Tibial artery (tissue), 4 donors: ENCODE measurements at regions of chr20 and their contacts with region 1.

Region 1: DNA sequence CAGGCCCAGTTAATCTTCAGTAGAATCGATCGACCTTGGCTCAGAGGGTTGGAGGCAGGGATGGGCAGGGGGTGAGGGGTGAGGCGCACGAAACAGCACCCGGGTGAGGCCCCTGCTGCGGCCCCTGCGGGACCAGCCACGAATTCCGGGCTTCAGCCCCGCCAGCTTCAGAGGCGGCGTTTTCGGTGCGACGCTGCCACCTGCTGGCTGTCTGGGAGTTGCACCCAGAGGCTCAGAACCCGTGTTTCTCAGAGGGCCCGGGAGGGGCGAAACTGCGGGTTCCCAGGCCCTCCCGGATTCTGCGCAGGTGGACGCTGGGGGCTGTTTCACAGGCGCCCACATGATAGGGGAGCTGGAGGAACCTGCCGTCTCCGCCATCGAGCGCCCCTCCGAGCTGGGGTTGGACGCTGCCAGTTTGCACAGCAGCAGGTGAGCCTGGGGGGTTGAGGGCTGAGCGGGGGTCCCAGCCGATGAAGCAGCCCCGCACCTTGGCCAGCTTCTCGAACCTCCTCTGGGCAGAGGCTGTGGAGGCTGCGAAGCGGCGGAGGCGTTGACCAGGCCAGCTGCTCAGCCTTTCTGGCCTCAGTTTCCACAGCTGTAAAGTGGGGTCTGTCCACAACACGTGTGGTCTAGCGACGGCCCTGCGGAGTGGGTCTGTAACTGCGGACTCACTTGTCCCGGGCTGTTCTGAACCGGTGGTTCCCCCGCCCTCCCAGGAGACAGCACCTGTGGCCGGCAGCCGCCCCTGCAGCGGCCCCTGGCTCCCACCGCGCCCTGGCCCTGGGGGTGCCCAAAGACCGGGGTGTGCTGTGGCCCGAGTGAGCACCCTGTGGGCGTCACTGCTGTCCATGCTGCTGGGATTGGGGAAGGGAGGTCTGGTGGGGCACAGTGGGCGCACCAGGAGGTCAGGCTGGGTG is 2.5 kb upstream of the BHLHE23 start:
- DNase-seq: peak; percentile 38 to 80
- H3K4me3 ChIP-seq: no peak overlapping the region
- H3K27ac ChIP-seq: no peak overlapping the region
- H3K4me1 ChIP-seq: peaks cover 0 to 36% (median 20%) of the 10 kb centered on the region in 4 donors
- H3K27me3 ChIP-seq: peaks cover 15 to 89% of the 10 kb centered on the region in 2 donors
- CTCF ChIP-seq: peak; percentile 92 to 95

Region 2: GRCh38 chr20:62900052-62900691 is 109.1 kb before region 1 on chr20:
- intact Hi-C with region 1: loop called (anchors 5 kb)
- DNase-seq: peak; percentile 71 to 84
- H3K4me3 ChIP-seq: no peak overlapping the region
- H3K27ac ChIP-seq: no peak overlapping the region
- H3K4me1 ChIP-seq: peaks cover 0 to 37% (median 18%) of the 10 kb centered on the region in 4 donors
- H3K27me3 ChIP-seq: no peaks in the 10 kb centered on the region
- CTCF ChIP-seq: peak; percentile 88 to 93

Region 3: DNA sequence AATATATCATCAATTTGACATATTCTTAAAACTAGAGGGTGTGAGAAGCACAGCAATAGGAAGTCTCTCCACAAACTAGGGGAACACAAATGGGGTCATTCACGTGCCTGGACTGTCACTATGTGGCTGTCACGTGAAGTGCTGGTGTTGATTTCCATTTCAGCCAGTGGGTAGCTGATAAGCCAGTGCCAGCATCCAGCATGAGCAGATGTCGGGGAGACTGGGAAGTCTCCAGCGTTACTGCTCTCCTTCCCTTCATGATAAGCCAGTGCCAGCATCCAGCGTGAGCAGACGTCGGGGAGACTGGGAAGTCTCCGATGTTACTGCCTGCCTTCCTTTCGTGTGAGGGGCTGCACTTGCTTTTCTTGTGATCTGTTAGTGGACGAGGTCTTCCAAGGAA is 62.4 kb before region 1 on chr20:
- intact Hi-C with region 1: no loop called
- DNase-seq: no peak
- H3K4me3 ChIP-seq: no peak overlapping the region
- H3K27ac ChIP-seq: no peak overlapping the region
- H3K4me1 ChIP-seq: peaks cover 0 to 11% (median 3%) of the 10 kb centered on the region in 4 donors
- H3K27me3 ChIP-seq: no peaks in the 10 kb centered on the region
- CTCF ChIP-seq: no peak